PC-9 (cell line): ENCODE measurements at regions of chr13 and their contacts with region 1.

Region 1: DNA sequence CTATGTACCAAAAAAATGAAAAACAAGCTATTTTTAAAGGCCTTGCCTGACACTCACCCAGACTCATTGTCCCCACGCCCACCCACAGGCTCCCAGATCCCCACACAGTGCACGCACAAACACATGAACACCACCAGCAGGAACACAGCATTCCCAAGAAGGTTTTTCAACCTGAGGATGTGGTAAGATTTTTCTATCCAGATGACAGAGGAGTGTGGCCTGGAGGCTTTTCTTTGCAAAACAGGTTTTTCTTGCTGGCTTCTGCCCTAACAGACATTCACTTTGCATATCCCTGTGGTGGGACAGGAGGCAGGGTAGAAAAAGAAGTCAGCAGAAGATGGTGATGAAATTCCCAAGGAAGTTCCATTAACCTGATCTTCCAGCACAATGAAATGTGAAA is 97.8 kb downstream of the KLF12 start:
- DNase-seq: peak; percentile 69 to 73
- H3K4me3 ChIP-seq: no peak overlapping the region
- H3K27ac ChIP-seq: no peak overlapping the region
- H3K4me1 ChIP-seq: peaks cover 8% of the 10 kb centered on the region
- H3K27me3 ChIP-seq: no peaks in the 10 kb centered on the region
- CTCF ChIP-seq: no peak

Region 2: GRCh38 chr13:73938375-73939070 is 97.8 kb before region 1 on chr13:
- CTCF ChIA-PET with region 1: no interaction called
- POLR2A ChIA-PET with region 1: no interaction called
- intact Hi-C with region 1: loop called (anchors 5 kb)
- DNase-seq: peak; percentile 20 to 53
- H3K4me3 ChIP-seq: no peak overlapping the region
- H3K27ac ChIP-seq: no peak overlapping the region
- H3K4me1 ChIP-seq: peaks cover 5% of the 10 kb centered on the region; the same call in 1 of the 2 replicates
- H3K27me3 ChIP-seq: no peaks in the 10 kb centered on the region
- CTCF ChIP-seq: no peak

Region 3: GRCh38 chr13:74047939-74048600 is 11.7 kb after region 1 on chr13:
- CTCF ChIA-PET with region 1: no interaction called
- POLR2A ChIA-PET with region 1: no interaction called
- intact Hi-C with region 1: loop called (anchors 1 kb)
- DNase-seq: peak in 1 of 2 experiments; percentile 73
- H3K4me3 ChIP-seq: no peak overlapping the region
- H3K27ac ChIP-seq: no peak overlapping the region
- H3K4me1 ChIP-seq: no peaks in the 10 kb centered on the region
- H3K27me3 ChIP-seq: no peaks in the 10 kb centered on the region
- CTCF ChIP-seq: no peak

Region 4: DNA sequence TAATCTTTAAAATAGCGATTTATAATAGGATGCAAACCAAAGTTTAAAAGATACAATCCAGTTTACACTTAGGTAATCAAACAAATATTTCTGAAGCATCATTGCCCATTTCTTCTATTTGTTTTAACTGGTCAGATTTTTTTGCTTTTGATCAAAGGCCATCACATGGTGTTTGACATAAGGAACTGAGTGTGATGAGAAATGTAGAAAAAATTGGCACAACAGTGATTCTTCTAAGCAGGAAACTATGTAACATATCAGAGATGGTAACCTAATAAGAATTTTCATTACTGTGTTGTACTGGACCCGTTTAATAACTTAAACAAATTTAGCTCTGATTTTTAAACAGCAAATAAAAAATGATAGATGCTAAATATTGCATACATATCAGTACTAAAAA is 742.6 kb after region 1 on chr13:
- CTCF ChIA-PET with region 1: no interaction called
- POLR2A ChIA-PET with region 1: no interaction called
- intact Hi-C with region 1: no loop called
- DNase-seq: no peak
- H3K4me3 ChIP-seq: no peak overlapping the region
- H3K27ac ChIP-seq: no peak overlapping the region
- H3K4me1 ChIP-seq: no peaks in the 10 kb centered on the region
- H3K27me3 ChIP-seq: no peaks in the 10 kb centered on the region
- CTCF ChIP-seq: no peak